ENCODE measurements at regions of chr1 and their contacts with region 1.

Region 1: GRCh38 chr1:204207136-204207616 is 6.6 kb downstream of the GOLT1A start:
- DNase-seq: peak; percentile 93
- ATAC-seq: peak; percentile 98
- H3K4me3 Mint-ChIP-seq: no peak overlapping the region
- H3K27ac Mint-ChIP-seq: no peak overlapping the region
- H3K4me1 Mint-ChIP-seq: no peaks in the 10 kb centered on the region
- H3K27me3 Mint-ChIP-seq: no peaks in the 10 kb centered on the region; the same call in 1 of the 2 replicates
- CTCF ChIP-seq: peak; percentile 94

Region 2: GRCh38 chr1:203861379-203862184 is 345.6 kb before region 1 on chr1 and contains the start of gene SNRPE:
- CTCF ChIA-PET with region 1: interaction called, 10 read pairs
- POLR2A ChIA-PET with region 1: no interaction called
- DNase-seq: peak; percentile 96
- ATAC-seq: peak; percentile 95
- H3K4me3 Mint-ChIP-seq: peak within 1 kb of the TSS; percentile 94
- H3K27ac Mint-ChIP-seq: peak within 1 kb of the TSS; percentile 98
- H3K4me1 Mint-ChIP-seq: peaks cover 11% of the 10 kb centered on the region
- H3K27me3 Mint-ChIP-seq: peaks cover 3% of the 10 kb centered on the region
- CTCF ChIP-seq: peak; percentile 87
- total RNA-seq, gene SNRPE: 245 to 260 TPM (median 250 TPM) in 3 replicates

Region 3: DNA sequence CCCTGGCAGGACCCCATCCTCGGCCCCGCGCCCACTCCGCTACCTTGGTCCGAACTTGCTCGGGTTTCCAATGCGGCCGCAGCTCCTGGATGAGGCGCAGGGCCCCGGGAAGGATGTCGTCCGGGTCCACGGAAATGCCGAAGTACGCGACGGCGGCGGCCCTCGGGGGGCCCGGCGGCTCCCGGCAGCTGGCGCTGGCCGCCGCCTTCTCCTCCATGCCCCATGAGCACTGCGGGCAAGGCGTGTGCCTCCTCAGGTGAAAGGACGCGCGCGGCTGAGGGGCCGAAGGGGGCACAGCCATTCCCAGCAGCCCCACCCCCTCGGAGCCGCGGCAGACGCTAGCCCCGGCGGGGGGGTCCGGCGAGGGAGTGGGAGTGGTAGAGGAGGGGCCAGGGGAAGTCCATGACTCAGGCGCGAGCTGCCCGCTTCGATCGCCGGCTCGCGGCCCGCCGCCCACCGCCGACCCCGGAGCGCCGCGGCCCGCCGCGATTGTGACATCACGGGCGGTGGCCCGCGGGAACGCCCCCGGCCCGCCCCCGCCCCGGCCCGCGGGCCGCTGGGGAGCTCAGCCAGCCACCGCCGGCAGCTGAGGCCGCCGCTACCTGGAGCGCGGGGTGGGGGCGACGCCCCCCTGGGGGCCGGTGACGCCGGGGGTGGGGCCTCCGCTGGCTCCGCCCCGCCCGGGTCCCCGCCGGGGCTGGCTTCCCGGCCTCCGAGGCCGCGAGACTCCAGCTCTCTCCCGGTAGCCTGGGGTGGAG is 55.4 kb before region 1 on chr1 and contains the start of gene ETNK2:
- CTCF ChIA-PET with region 1: interaction called, 19 read pairs
- POLR2A ChIA-PET with region 1: no interaction called
- DNase-seq: peak; percentile 66
- ATAC-seq: peak; percentile 29
- H3K4me3 Mint-ChIP-seq: peak within 1 kb of the TSS; percentile 73
- H3K27ac Mint-ChIP-seq: no peak within 1 kb of the TSS
- H3K4me1 Mint-ChIP-seq: peaks cover 39% of the 10 kb centered on the region
- H3K27me3 Mint-ChIP-seq: peaks cover 29% of the 10 kb centered on the region
- CTCF ChIP-seq: no peak
- total RNA-seq, gene ETNK2: 18.3 to 20.2 TPM (median 19.7 TPM) in 3 replicates

Region 4: GRCh38 chr1:204190212-204191211 is 16.7 kb before region 1 on chr1:
- CTCF ChIA-PET with region 1: interaction called, 68 read pairs
- POLR2A ChIA-PET with region 1: no interaction called
- DNase-seq: peak; percentile 75
- ATAC-seq: peak; percentile 78
- H3K4me3 Mint-ChIP-seq: peak overlapping the region; percentile 61
- H3K27ac Mint-ChIP-seq: no peak overlapping the region
- H3K4me1 Mint-ChIP-seq: peaks cover 8% of the 10 kb centered on the region
- H3K27me3 Mint-ChIP-seq: peaks cover 66% of the 10 kb centered on the region
- CTCF ChIP-seq: no peak

Region 5: GRCh38 chr1:204257954-204258752 is 51.0 kb after region 1 on chr1:
- CTCF ChIA-PET with region 1: interaction called, 34 read pairs
- POLR2A ChIA-PET with region 1: no interaction called
- DNase-seq: peak; percentile 86
- ATAC-seq: peak; percentile 71
- H3K4me3 Mint-ChIP-seq: no peak overlapping the region
- H3K27ac Mint-ChIP-seq: no peak overlapping the region
- H3K4me1 Mint-ChIP-seq: peaks cover 36% of the 10 kb centered on the region
- H3K27me3 Mint-ChIP-seq: no peaks in the 10 kb centered on the region
- CTCF ChIP-seq: peak; percentile 57

Region 6: DNA sequence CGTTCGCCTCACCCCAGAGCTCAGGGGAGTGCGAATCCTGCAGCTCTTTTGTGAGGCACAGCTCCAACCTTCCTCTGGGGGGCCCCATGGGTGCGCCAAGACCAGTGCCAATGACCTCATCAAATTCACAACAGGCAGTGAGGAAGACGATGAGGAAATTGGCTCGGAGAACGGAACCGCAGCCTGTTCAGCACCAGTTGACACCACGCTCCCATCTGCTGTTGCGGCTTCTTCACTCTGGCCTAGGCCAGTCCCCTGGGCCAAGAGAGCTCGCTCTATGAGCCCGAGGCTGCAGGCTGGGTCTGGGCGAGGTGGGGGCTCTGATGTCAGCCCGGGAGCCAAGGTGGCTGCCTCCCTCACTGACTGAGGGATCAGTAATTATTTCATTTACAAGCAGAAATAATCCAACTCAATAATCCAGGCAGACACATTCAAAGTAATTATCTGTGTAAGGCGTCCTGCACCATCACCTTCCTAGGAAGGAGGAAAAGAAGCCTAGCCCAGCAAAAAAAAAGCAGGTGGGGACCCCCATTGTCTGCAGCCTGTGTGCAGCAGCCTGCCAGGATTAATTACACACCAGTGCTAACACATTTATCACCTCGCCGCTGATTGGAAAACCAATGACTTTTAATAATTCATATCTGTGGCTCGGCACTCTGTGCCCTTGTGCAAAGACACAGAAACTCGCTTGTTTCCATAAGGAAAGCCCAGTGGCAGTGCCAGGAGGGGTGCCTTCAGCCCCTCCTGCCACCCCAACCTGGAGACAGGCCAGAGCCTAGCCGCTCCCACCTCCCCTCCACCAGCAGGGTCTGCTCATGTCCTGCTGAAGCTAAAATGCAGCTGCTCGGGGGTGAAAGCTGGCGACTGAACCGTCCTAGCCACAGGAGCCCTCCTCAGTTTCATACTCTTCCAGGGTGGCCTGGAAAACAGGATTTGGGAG is 150.6 kb after region 1 on chr1:
- CTCF ChIA-PET with region 1: interaction called, 118 read pairs
- POLR2A ChIA-PET with region 1: no interaction called
- DNase-seq: no peak
- ATAC-seq: peak; percentile 25
- H3K4me3 Mint-ChIP-seq: no peak overlapping the region
- H3K27ac Mint-ChIP-seq: no peak overlapping the region
- H3K4me1 Mint-ChIP-seq: peaks cover 30% of the 10 kb centered on the region
- H3K27me3 Mint-ChIP-seq: peaks cover 14% of the 10 kb centered on the region
- CTCF ChIP-seq: no peak

Region 7: GRCh38 chr1:204377795-204378608 is 170.8 kb after region 1 on chr1:
- CTCF ChIA-PET with region 1: interaction called, 24 read pairs
- POLR2A ChIA-PET with region 1: no interaction called
- DNase-seq: peak; percentile 72
- ATAC-seq: peak; percentile 85
- H3K4me3 Mint-ChIP-seq: peak overlapping the region; percentile 85
- H3K27ac Mint-ChIP-seq: peak overlapping the region; percentile 82; the same call in 1 of the 2 replicates
- H3K4me1 Mint-ChIP-seq: peaks cover 9% of the 10 kb centered on the region
- H3K27me3 Mint-ChIP-seq: peaks cover 36% of the 10 kb centered on the region
- CTCF ChIP-seq: no peak

Region 8: DNA sequence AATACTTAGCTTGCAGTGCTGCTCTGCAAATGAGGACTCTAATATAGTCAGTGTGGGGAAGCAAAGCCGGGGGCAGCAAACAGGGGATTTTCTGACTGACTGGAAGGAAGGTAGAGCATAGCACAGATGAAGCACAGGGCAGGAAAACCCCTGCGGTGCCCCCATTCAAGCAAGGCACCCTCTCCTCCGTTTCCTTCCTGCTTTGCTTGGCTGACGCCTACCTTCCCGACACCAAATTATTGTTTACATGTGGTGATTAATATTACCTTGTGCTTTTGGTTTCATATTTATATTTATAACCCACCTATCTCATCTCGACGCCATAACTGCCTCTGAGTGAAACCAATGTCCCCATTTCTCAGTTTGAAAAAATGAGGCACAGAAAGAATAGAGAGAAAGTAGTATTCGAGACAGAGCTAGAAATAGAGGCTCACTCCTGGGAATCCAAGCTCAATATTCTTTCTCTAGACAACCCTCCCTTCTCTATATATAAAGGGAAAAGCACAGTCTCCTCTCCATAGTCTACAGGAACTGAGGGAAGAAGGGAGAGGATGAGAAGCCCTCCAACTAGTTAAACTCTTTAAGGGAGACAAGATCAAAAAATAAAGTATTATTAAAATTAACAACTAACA is 246.1 kb after region 1 on chr1:
- CTCF ChIA-PET with region 1: no interaction called
- POLR2A ChIA-PET with region 1: no interaction called
- DNase-seq: no peak
- ATAC-seq: peak; percentile 35
- H3K4me3 Mint-ChIP-seq: no peak overlapping the region
- H3K27ac Mint-ChIP-seq: peak overlapping the region; percentile 75; the same call in 1 of the 2 replicates
- H3K4me1 Mint-ChIP-seq: peaks cover 73% of the 10 kb centered on the region
- H3K27me3 Mint-ChIP-seq: no peaks in the 10 kb centered on the region
- CTCF ChIP-seq: no peak